Heart right ventricle (tissue), 16 donors: ENCODE measurements at regions of chr9 and their contacts with region 1.

Region 1: GRCh38 chr9:9448796-9449195 is 1164.0 kb downstream of the PTPRD start:
- DNase-seq: no peak
- ATAC-seq: no peak
- H3K4me3 ChIP-seq: no peak overlapping the region
- H3K27ac ChIP-seq: no peak overlapping the region
- H3K4me1 ChIP-seq: no peaks in the 10 kb centered on the region
- H3K27me3 ChIP-seq: no peaks in the 10 kb centered on the region
- CTCF ChIP-seq: no peak

Region 2: GRCh38 chr9:8229226-8229625 is 1219.6 kb before region 1 on chr9:
- intact Hi-C with region 1: loop called in 1 of 10 experiments (anchors 5 kb)
- DNase-seq: no peak
- ATAC-seq: no peak
- H3K4me3 ChIP-seq: no peak overlapping the region
- H3K27ac ChIP-seq: no peak overlapping the region
- H3K4me1 ChIP-seq: no peaks in the 10 kb centered on the region
- H3K27me3 ChIP-seq: no peaks in the 10 kb centered on the region
- CTCF ChIP-seq: no peak

Region 3: GRCh38 chr9:9305600-9305999 is 143.2 kb before region 1 on chr9:
- intact Hi-C with region 1: no loop called
- DNase-seq: no peak
- ATAC-seq: no peak
- H3K4me3 ChIP-seq: no peak overlapping the region
- H3K27ac ChIP-seq: no peak overlapping the region
- H3K4me1 ChIP-seq: no peaks in the 10 kb centered on the region
- H3K27me3 ChIP-seq: no peaks in the 10 kb centered on the region
- CTCF ChIP-seq: no peak

Region 4: GRCh38 chr9:9469271-9469670 is 20.5 kb after region 1 on chr9:
- intact Hi-C with region 1: no loop called
- DNase-seq: no peak
- ATAC-seq: no peak
- H3K4me3 ChIP-seq: no peak overlapping the region
- H3K27ac ChIP-seq: no peak overlapping the region
- H3K4me1 ChIP-seq: no peaks in the 10 kb centered on the region
- H3K27me3 ChIP-seq: no peaks in the 10 kb centered on the region
- CTCF ChIP-seq: no peak